Activated CD8-positive, alpha-beta T cell treated with anti-CD3 and anti-CD28 coated beads for 36 hours (primary cell): ENCODE measurements at regions of chr14 and their contacts with region 1.

Region 1: DNA sequence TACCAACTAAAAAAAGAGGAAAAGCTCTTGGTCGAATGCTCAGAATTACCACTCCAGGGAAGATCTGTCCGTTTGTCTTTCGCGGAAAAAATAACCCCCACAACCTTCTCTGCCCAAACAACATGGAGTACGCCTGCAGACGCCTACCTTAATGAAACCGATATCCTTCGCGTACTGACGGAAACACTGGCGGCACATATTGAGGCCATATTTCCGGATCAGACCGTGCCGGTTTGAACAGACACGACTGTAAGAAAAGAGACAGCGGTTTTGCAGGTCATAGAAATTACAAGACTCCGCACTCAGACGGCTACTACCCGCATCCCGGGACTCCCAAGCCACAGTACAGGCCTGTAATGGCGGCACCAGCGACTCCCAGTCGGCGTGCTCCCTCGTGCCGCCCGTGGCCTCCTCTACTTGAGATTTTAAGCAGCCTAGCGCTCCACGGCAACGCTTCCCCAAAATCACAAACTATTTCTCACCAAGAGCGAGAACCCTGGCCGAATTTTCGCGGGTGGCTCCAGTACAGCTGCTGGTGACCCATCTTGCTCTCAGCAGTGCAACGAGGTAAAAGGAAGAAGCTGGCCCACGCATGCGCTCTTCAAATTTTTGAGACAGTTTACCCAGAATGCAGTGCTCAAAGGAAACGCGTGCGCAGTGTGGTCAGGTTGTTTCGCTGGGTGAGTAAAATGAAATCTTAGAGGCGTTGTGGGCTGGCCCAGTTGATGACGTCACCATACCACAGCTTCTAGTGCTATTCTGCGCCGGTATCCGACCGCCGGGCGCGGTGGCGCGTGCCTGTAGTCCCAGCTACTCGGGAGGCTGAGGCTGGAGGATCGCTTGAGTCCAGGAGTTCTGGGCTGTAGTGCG is at the start of gene RPS29:
- DNase-seq: peak; percentile 99
- ATAC-seq: peak; percentile 82
- H3K4me3 Mint-ChIP-seq: peak within 1 kb of the TSS; percentile 91
- H3K27ac Mint-ChIP-seq: peak within 1 kb of the TSS; percentile 96
- H3K4me1 Mint-ChIP-seq: peaks cover 41% of the 10 kb centered on the region
- H3K27me3 Mint-ChIP-seq: peaks cover 2% of the 10 kb centered on the region
- CTCF ChIP-seq: no peak
- total RNA-seq, gene RPS29: 2,041 to 2,284 TPM

Region 2: GRCh38 chr14:49546766-49547165 is 39.3 kb before region 1 on chr14:
- CTCF ChIA-PET with region 1: no interaction called
- POLR2A ChIA-PET with region 1: no interaction called
- intact Hi-C with region 1: no loop called
- DNase-seq: no peak
- ATAC-seq: no peak
- H3K4me3 Mint-ChIP-seq: no peak overlapping the region
- H3K27ac Mint-ChIP-seq: no peak overlapping the region
- H3K4me1 Mint-ChIP-seq: no peaks in the 10 kb centered on the region
- H3K27me3 Mint-ChIP-seq: no peaks in the 10 kb centered on the region
- CTCF ChIP-seq: no peak

Region 3: GRCh38 chr14:49574038-49574437 is 12.0 kb before region 1 on chr14:
- CTCF ChIA-PET with region 1: interaction called, 4 read pairs
- POLR2A ChIA-PET with region 1: interaction called, 25 read pairs
- intact Hi-C with region 1: no loop called
- DNase-seq: no peak
- ATAC-seq: no peak
- H3K4me3 Mint-ChIP-seq: no peak overlapping the region
- H3K27ac Mint-ChIP-seq: no peak overlapping the region
- H3K4me1 Mint-ChIP-seq: peaks cover 30% of the 10 kb centered on the region
- H3K27me3 Mint-ChIP-seq: no peaks in the 10 kb centered on the region
- CTCF ChIP-seq: no peak

Region 4: GRCh38 chr14:49598485-49599300 is 12.7 kb after region 1 on chr14 and contains the start of gene LRR1:
- CTCF ChIA-PET with region 1: interaction called, 27 read pairs
- POLR2A ChIA-PET with region 1: interaction called, 110 read pairs
- intact Hi-C with region 1: no loop called
- DNase-seq: peak; percentile 89
- ATAC-seq: peak; percentile 86
- H3K4me3 Mint-ChIP-seq: peak within 1 kb of the TSS; percentile 98
- H3K27ac Mint-ChIP-seq: peak within 1 kb of the TSS; percentile 98
- H3K4me1 Mint-ChIP-seq: peaks cover 18% of the 10 kb centered on the region
- H3K27me3 Mint-ChIP-seq: no peaks in the 10 kb centered on the region
- CTCF ChIP-seq: no peak
- total RNA-seq, gene LRR1: 44.3 to 46.4 TPM